ENCODE measurements at regions of chr14 and their contacts with region 1.

Region 1: GRCh38 chr14:95098984-95099599 is 58.2 kb downstream of the DICER1 start:
- DNase-seq: peak in 6 of 9 donors; percentile 14 to 36 (median 27)
- ATAC-seq: peak; percentile 64
- H3K4me3 ChIP-seq: no peak overlapping the region
- H3K4me3 Mint-ChIP-seq: no peak overlapping the region
- H3K27ac ChIP-seq: no peak overlapping the region
- H3K27ac Mint-ChIP-seq: peak overlapping the region in 3 of 9 donors; percentile 4 to 52 (median 51)
- H3K4me1 ChIP-seq: no peaks in the 10 kb centered on the region
- H3K4me1 Mint-ChIP-seq: peaks cover 10 to 41% (median 33%) of the 10 kb centered on the region in 7 donors
- H3K27me3 ChIP-seq: no peaks in the 10 kb centered on the region
- H3K27me3 Mint-ChIP-seq: no peaks in the 10 kb centered on the region

Region 2: DNA sequence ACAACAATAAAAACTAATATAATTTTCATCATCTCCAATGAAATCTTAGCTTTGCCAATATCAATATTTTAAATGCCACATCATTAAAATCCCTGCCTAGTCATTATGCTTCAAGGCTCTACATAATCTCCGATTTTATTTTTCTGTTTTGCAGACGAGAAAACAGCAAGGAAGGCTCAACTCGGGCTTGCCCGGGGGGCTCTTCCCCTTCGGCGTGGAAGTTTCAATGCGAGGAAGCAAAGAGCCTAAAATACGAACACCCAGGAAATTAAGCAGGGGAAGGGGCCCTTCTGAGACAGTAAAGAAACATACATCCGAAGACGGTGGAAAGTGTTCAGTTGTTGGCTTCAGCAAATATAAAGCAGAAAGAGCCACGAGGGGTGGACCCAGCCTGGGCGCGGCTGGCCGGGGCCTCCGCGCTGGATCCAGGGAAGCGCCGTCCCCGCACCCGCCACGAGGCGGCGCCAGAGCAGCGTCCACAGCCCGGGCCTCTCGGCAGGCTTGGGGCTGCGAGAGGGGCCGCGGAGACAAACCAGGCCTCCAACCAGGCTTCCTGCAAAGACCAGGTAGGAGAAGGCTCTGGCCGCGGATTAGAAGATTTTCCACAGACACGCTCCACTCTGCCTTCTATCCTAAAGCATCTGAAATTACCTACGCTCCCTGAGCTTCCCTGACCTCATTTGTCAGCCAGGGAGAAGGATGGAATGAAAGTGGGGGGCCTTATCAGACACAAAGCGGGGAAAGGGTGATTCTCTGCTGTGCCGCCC is 409.7 kb before region 1 on chr14:
- CTCF ChIA-PET with region 1: no interaction called
- POLR2A ChIA-PET with region 1: no interaction called
- intact Hi-C with region 1: loop called in 1 of 2 experiments (anchors 2 kb)
- DNase-seq: peak in 6 of 9 donors; percentile 5 to 66 (median 23)
- ATAC-seq: peak; percentile 76
- H3K4me3 ChIP-seq: no peak overlapping the region
- H3K4me3 Mint-ChIP-seq: peak overlapping the region in 1 of 10 donors; percentile 1
- H3K27ac ChIP-seq: no peak overlapping the region
- H3K27ac Mint-ChIP-seq: no peak overlapping the region
- H3K4me1 ChIP-seq: no peaks in the 10 kb centered on the region
- H3K4me1 Mint-ChIP-seq: peaks cover 0 to 4% (median 0%) of the 10 kb centered on the region in 7 donors
- H3K27me3 ChIP-seq: no peaks in the 10 kb centered on the region
- H3K27me3 Mint-ChIP-seq: peaks cover 8 to 27% (median 18%) of the 10 kb centered on the region in 5 donors